T-cell (primary cell): ENCODE measurements at regions of chr19 and their contacts with region 1.

Region 1: DNA sequence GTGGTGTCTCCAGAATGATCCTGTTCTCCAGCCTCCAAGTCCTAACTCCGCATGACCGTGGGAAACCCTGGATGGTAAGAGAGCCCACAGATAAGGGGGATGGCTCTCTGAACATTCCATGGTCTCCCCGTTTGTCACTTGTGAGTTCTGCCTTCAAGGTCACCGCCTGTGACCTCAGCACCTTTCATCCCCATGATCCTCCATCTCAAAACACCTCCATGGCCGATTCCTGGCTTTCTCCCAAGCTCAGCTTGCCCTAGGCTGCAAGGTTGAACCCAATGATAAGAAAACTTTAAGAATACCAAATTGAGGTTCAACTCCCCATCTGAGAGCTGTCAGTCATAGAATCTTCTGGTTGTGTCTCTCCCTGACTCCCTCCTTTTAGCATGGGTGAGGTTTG is 47.9 kb downstream of the ACSBG2 start:
- DNase-seq: no peak
- ATAC-seq: no peak
- H3K4me3 ChIP-seq: no peak overlapping the region
- H3K4me3 Mint-ChIP-seq: no peak overlapping the region
- H3K27ac ChIP-seq: no peak overlapping the region
- H3K27ac Mint-ChIP-seq: no peak overlapping the region
- H3K4me1 ChIP-seq: no peaks in the 10 kb centered on the region
- H3K4me1 Mint-ChIP-seq: peaks cover 0 to 6% (median 5%) of the 10 kb centered on the region in 3 donors
- H3K27me3 ChIP-seq: peaks cover 0 to 51% of the 10 kb centered on the region in 2 experiments
- H3K27me3 Mint-ChIP-seq: peaks cover 17 to 36% of the 10 kb centered on the region in 2 donors

Region 2: GRCh38 chr19:5665796-5666513 is 517.4 kb before region 1 on chr19:
- CTCF ChIA-PET with region 1: no interaction called
- POLR2A ChIA-PET with region 1: no interaction called
- DNase-seq: no peak
- ATAC-seq: no peak
- H3K4me3 ChIP-seq: no peak overlapping the region
- H3K4me3 Mint-ChIP-seq: no peak overlapping the region
- H3K27ac ChIP-seq: no peak overlapping the region
- H3K27ac Mint-ChIP-seq: peak overlapping the region in 1 of 2 donors; percentile 28
- H3K4me1 ChIP-seq: no peaks in the 10 kb centered on the region
- H3K4me1 Mint-ChIP-seq: no peaks in the 10 kb centered on the region
- H3K27me3 ChIP-seq: no peaks in the 10 kb centered on the region
- H3K27me3 Mint-ChIP-seq: no peaks in the 10 kb centered on the region

Region 3: GRCh38 chr19:5857203-5858081 is 325.9 kb before region 1 on chr19:
- CTCF ChIA-PET with region 1: interaction called in 1 of 2 experiments, 12 read pairs
- POLR2A ChIA-PET with region 1: no interaction called
- DNase-seq: no peak
- ATAC-seq: no peak
- H3K4me3 ChIP-seq: no peak overlapping the region
- H3K4me3 Mint-ChIP-seq: no peak overlapping the region
- H3K27ac ChIP-seq: no peak overlapping the region
- H3K27ac Mint-ChIP-seq: no peak overlapping the region
- H3K4me1 ChIP-seq: no peaks in the 10 kb centered on the region
- H3K4me1 Mint-ChIP-seq: no peaks in the 10 kb centered on the region
- H3K27me3 ChIP-seq: peaks cover 0 to 5% of the 10 kb centered on the region in 2 experiments
- H3K27me3 Mint-ChIP-seq: peaks cover 0 to 11% of the 10 kb centered on the region in 2 donors